ENCODE measurements at regions of chr6 and their contacts with region 1.

Region 1: DNA sequence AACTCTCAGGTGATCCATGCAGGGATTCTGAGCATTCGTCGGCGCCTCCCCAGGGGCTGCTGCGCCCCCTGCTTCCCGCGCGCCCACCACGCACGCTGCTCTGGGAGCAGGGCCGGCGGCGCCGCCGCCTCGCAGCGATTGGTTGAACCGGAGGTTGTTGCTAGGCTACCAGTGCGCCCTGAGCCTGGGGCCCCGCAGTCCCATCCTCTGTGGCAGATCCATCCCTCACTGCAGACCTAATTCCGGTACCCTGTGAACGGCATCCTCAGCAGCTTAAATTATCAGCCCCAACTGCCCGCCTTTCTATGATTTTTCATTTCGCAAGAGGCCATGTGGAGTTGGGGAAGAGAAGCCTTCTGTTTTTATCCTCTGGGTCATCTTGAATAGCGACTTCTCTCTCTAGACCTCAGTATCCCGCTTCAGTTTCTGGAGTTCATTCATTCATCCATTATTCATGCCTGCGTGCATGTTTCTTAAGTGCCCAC is 15.4 kb downstream of the PNPLA1 start:
- DNase-seq: no peak
- H3K4me3 ChIP-seq: no peak overlapping the region
- H3K4me3 Mint-ChIP-seq: no peak overlapping the region
- H3K27ac ChIP-seq: no peak overlapping the region
- H3K27ac Mint-ChIP-seq: no peak overlapping the region
- H3K4me1 ChIP-seq: peaks cover 11% of the 10 kb centered on the region
- H3K4me1 Mint-ChIP-seq: peaks cover 6 to 14% (median 10%) of the 10 kb centered on the region in 4 donors
- H3K27me3 ChIP-seq: peaks cover 17% of the 10 kb centered on the region
- H3K27me3 Mint-ChIP-seq: peaks cover 25 to 32% of the 10 kb centered on the region in 2 donors

Region 2: GRCh38 chr6:36268478-36269275 is 16.6 kb before region 1 on chr6:
- CTCF ChIA-PET with region 1: no interaction called
- POLR2A ChIA-PET with region 1: no interaction called
- intact Hi-C with region 1: no loop called
- DNase-seq: no peak
- H3K4me3 ChIP-seq: no peak overlapping the region
- H3K4me3 Mint-ChIP-seq: no peak overlapping the region
- H3K27ac ChIP-seq: no peak overlapping the region
- H3K27ac Mint-ChIP-seq: peak overlapping the region in 1 of 7 donors; percentile 1
- H3K4me1 ChIP-seq: no peaks in the 10 kb centered on the region
- H3K4me1 Mint-ChIP-seq: no peaks in the 10 kb centered on the region
- H3K27me3 ChIP-seq: no peaks in the 10 kb centered on the region
- H3K27me3 Mint-ChIP-seq: peaks cover 4 to 20% of the 10 kb centered on the region in 2 donors

Region 3: GRCh38 chr6:36302227-36302976 is 17.2 kb after region 1 on chr6:
- CTCF ChIA-PET with region 1: interaction called, 13 read pairs
- POLR2A ChIA-PET with region 1: no interaction called
- intact Hi-C with region 1: no loop called
- DNase-seq: peak; percentile 86 to 91 (median 87)
- H3K4me3 ChIP-seq: no peak overlapping the region
- H3K4me3 Mint-ChIP-seq: no peak overlapping the region
- H3K27ac ChIP-seq: no peak overlapping the region
- H3K27ac Mint-ChIP-seq: peak overlapping the region in 2 of 7 donors; percentile 30 to 32
- H3K4me1 ChIP-seq: no peaks in the 10 kb centered on the region
- H3K4me1 Mint-ChIP-seq: peaks cover 0 to 9% (median 2%) of the 10 kb centered on the region in 4 donors
- H3K27me3 ChIP-seq: no peaks in the 10 kb centered on the region
- H3K27me3 Mint-ChIP-seq: peaks cover 10 to 22% of the 10 kb centered on the region in 2 donors

Region 4: GRCh38 chr6:36314221-36315014 is 29.2 kb after region 1 on chr6:
- CTCF ChIA-PET with region 1: no interaction called
- POLR2A ChIA-PET with region 1: no interaction called
- intact Hi-C with region 1: loop called (anchors 1 kb)
- DNase-seq: no peak
- H3K4me3 ChIP-seq: no peak overlapping the region
- H3K4me3 Mint-ChIP-seq: no peak overlapping the region
- H3K27ac ChIP-seq: no peak overlapping the region
- H3K27ac Mint-ChIP-seq: peak overlapping the region in 1 of 7 donors; percentile 16
- H3K4me1 ChIP-seq: no peaks in the 10 kb centered on the region
- H3K4me1 Mint-ChIP-seq: no peaks in the 10 kb centered on the region
- H3K27me3 ChIP-seq: no peaks in the 10 kb centered on the region
- H3K27me3 Mint-ChIP-seq: peaks cover 1 to 10% of the 10 kb centered on the region in 2 donors

Measured in CD4-positive, alpha-beta memory T cell (primary cell).